ENCODE measurements at regions of chr15 and their contacts with region 1.

Region 1: GRCh38 chr15:51982013-51982769 is 10.6 kb upstream of the LEO1 start:
- DNase-seq: peak; percentile 25 to 54
- ATAC-seq: peak in 3 of 4 donors; percentile 62 to 78 (median 69)
- H3K4me3 ChIP-seq: peak overlapping the region; percentile 49
- H3K27ac ChIP-seq: peak overlapping the region; percentile 53
- H3K4me1 ChIP-seq: peaks cover 15% of the 10 kb centered on the region
- H3K27me3 ChIP-seq: no peaks in the 10 kb centered on the region
- CTCF ChIP-seq: peak; percentile 34

Region 2: DNA sequence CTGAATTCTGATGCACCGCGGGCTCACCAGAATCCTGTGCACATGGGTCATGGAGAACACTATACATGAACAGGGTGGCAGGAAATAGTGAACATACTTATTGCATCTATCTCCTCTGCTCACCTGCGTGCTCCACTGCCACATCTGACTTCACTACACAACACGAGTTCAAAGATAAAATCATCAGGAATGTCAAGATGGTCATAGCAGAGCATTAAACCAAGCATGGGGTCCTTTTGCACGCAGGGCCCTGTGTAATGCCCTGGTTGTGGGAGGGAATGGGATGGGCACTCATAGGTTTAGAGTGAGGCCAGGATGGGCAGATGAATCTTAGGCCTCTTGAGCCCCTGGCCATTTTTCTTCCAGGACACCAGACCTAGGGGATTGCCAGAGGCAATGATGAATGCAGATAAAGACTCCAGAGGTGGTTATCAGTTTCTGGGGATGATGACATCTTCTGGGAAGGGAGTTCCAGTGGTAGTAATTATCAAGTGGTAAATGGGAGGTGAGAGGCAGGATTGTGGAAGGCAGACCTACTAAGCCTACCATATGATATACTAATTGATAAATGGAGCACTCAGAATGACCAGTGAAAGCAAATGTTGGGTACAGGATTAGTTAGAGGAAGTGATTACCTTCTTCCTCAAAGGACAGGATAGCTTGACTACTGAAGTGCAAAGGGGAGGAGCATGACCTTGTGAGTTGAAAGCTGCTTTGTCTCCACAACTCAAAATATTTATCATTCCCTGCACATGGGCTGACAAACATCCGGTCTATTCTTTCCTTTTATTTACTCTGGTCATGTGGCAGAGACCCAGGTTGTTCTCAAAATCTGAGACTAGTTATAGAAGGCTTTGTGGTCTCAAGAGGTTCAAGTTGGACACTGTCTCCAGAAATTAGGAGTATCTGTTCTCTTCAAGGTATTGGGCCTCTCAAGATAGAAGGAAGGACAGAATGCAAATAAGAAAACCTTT is 26.6 kb after region 1 on chr15:
- intact Hi-C with region 1: no loop called
- DNase-seq: no peak
- ATAC-seq: no peak
- H3K4me3 ChIP-seq: no peak overlapping the region
- H3K27ac ChIP-seq: no peak overlapping the region
- H3K4me1 ChIP-seq: peaks cover 19% of the 10 kb centered on the region
- H3K27me3 ChIP-seq: no peaks in the 10 kb centered on the region
- CTCF ChIP-seq: no peak

Region 3: DNA sequence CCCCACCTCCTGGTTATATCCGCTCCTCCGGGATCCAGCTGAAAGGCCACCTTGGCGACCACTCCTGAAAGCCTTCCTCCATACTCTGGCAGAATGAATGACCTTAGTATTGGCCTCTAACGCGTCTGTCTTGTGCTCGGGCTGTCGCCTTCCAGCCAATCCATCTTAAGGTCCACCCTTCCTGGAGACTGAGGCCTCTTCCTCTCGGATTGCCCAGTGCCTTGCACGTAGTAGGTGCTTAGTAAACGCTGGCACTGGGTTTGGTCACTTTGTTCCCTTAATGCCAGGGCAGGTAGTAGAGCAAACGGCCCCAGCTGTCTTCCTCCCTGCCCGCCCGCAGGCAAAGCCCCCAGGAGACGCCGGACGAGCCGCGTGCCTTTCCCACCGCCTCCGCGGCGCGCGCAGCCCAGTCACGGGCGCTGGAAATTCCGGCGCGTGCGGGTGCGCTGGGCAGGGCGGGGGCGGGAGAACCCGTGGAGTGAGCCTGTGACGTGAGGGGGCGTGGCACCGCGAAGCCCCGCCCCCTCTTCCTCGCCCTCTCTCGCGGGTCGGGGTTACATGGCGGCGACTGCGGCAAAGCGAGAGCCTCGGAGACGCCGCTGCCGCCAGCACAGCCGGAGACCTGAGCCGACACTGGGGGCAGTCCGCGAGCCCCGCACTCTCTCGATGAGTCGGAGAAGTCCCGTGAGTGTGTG is 36.6 kb after region 1 on chr15 and contains the start of gene MAPK6:
- intact Hi-C with region 1: loop called (anchors 5 kb)
- DNase-seq: peak; percentile 96 to 97
- ATAC-seq: peak; percentile 89 to 95 (median 92)
- H3K4me3 ChIP-seq: peak within 1 kb of the TSS; percentile 65
- H3K27ac ChIP-seq: peak within 1 kb of the TSS; percentile 83
- H3K4me1 ChIP-seq: peaks cover 32% of the 10 kb centered on the region
- H3K27me3 ChIP-seq: no peaks in the 10 kb centered on the region
- CTCF ChIP-seq: no peak
- total RNA-seq, gene MAPK6: 29.4 to 58.5 (median 47.7) TPM

Region 4: DNA sequence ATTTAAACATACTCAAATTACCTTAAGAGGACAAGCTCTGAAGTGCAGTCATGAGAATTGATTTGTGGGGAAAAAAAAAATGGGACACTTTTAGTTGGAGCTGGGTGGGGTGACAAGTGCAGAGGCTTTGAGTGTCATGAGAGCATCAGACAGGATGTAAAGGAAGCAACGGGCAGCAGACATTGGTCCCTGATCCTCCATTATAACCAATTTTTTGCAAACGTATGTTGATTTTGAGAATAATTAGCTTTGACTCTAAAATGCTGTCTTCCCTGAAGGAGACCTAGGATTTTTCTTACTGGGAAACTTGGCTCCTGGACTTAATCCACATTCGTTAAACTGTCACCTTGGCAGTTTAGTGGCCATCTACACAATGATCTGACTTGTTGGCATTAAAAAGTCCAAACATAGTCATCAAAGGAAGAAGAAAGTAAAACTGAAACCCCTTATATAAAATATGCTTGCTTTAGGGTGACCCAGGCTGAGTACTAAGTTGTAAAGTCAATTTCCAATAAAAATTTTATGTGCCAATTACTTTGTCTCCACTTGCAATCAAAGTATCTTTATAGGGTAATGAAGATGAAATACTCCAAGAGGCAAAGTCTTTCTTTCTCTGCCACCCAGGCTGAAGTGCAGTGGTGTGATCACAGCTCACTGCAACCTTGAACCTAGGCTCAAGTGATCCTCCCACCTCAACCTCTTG is 84.8 kb after region 1 on chr15:
- intact Hi-C with region 1: no loop called
- DNase-seq: no peak
- ATAC-seq: peak in 1 of 4 donors; percentile 23
- H3K4me3 ChIP-seq: no peak overlapping the region
- H3K27ac ChIP-seq: no peak overlapping the region
- H3K4me1 ChIP-seq: no peaks in the 10 kb centered on the region
- H3K27me3 ChIP-seq: no peaks in the 10 kb centered on the region
- CTCF ChIP-seq: no peak